Sigmoid colon (tissue), 7 donors: ENCODE measurements at regions of chr19 and their contacts with region 1.

Region 1: DNA sequence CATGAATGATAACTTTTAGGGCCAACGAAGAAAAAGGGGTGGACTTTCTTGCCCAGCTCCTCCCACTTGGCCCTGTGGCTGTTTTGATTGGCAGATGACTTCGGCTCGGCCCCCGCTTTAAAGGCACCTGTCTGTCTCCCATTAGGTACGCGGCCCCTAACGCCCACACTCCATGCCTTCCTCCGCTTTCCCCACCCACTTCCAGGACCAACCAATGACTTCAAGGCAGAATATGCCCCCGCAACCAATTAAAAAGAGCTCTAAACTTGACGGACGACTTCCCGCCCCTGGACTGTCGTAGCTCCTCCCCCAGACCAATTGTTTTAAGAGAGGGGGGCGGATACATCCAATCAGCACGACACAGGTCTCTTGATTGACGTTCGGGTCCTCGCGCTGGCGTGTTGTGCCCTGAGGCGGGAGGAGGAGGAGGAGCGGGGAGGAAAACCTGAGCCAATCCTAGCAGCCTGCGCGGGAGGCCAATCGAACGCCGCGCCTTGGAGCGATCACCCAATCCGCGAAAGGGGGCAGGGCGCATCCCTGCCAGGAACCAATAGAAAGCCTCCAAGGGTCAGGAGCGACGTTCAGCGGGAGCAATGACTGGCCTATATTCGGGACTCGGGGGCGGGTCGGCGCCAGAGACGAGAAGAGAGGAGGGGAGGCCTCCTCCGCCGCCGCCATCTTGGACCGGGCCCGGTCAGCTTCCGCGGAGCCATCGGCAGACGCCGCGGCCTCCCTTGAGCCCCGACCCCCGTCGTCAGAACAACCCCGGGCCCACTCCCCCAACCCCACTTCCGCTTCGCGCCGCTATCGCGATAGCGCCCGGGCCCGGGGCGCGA is at the start of gene CNOT3:
- DNase-seq: peak; percentile 100
- H3K4me3 ChIP-seq: peak within 1 kb of the TSS; percentile 99 to 100 (median 100)
- H3K27ac ChIP-seq: peak within 1 kb of the TSS; percentile 96 to 99 (median 96)
- H3K4me1 ChIP-seq: peaks cover 0 to 51% (median 44%) of the 10 kb centered on the region in 4 donors
- H3K27me3 ChIP-seq: no peaks in the 10 kb centered on the region
- CTCF ChIP-seq: no peak
- EP300 ChIP-seq: no peak
- POLR2A ChIP-seq: peak; percentile 75 to 83
- total RNA-seq, gene CNOT3: 11.8 to 31.5 (median 21.2) TPM

Region 2: GRCh38 chr19:53812335-53812734 is 325.0 kb before region 1 on chr19:
- intact Hi-C with region 1: no loop called
- DNase-seq: no peak
- H3K4me3 ChIP-seq: no peak overlapping the region
- H3K27ac ChIP-seq: no peak overlapping the region
- H3K4me1 ChIP-seq: no peaks in the 10 kb centered on the region
- H3K27me3 ChIP-seq: no peaks in the 10 kb centered on the region
- CTCF ChIP-seq: no peak
- EP300 ChIP-seq: no peak
- POLR2A ChIP-seq: no peak

Region 3: GRCh38 chr19:54115109-54116063 is 21.9 kb before region 1 on chr19 and contains the starts of genes PRPF31 and TFPT:
- intact Hi-C with region 1: loop called (anchors 2 kb)
- DNase-seq: peak; percentile 99
- H3K4me3 ChIP-seq: peak within 1 kb of the TSS; percentile 67 to 89 (median 72)
- H3K27ac ChIP-seq: peak within 1 kb of the TSS; percentile 87 to 89 (median 88)
- H3K4me1 ChIP-seq: peaks cover 2 to 29% (median 25%) of the 10 kb centered on the region in 4 donors
- H3K27me3 ChIP-seq: no peaks in the 10 kb centered on the region
- CTCF ChIP-seq: no peak
- EP300 ChIP-seq: peak in 1 of 4 donors; percentile 15
- POLR2A ChIP-seq: peak; percentile 73 to 77
- total RNA-seq, gene PRPF31: 48.7 to 53.5 (median 51.5) TPM
- total RNA-seq, gene TFPT: 18.2 to 24.7 (median 20.4) TPM

Region 4: DNA sequence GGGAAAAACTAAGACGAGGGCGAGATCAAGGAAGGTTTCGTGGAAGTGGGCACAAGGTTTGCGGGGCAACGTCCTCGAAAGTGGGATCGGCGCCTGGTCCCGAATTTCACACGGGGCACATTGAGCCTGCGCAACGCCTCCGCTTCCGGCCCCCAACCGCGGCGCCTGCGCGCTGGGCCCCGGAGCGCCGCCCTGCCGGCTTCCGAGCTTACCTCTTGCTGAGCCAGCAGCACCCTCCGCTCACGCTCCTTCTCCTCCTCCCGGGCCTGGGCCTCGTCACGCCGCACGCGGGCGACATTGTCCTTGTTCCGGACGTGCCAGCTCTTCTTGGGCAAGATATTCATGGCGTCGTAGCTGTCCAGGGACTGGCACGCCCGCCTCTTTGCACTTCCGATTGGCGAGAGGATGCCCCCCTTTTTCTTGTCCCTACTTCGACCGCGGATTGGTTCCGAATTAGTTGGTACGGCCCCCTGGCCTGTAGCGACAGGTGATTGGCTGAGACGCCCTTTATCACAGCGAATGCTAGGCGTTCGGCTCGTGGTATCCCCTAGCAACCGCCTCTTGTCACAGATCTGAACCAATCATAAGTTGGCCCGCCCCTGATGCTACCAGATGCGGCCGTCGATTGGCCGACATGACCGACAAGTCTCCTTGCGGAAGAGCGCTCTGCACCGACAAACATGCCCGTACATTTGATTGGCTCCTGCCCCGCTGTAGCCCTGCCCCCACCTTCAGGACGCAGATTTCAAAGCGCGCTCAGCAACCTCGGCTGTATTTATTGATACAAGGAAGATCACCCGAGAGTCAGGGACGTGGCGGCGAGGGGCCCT is 22.3 kb after region 1 on chr19 and contains the start of gene LENG1:
- intact Hi-C with region 1: loop called (anchors 2 kb)
- DNase-seq: peak; percentile 100
- H3K4me3 ChIP-seq: peak within 1 kb of the TSS; percentile 69 to 83 (median 72)
- H3K27ac ChIP-seq: peak within 1 kb of the TSS; percentile 96 to 98 (median 96)
- H3K4me1 ChIP-seq: peaks cover 0 to 52% (median 49%) of the 10 kb centered on the region in 4 donors
- H3K27me3 ChIP-seq: peaks cover 4 to 5% (median 4%) of the 10 kb centered on the region in 3 donors
- CTCF ChIP-seq: no peak
- EP300 ChIP-seq: no peak
- POLR2A ChIP-seq: peak; percentile 41 to 53
- total RNA-seq, gene LENG1: 7.8 to 10.0 (median 8.7) TPM